CD8-positive, alpha-beta memory T cell (primary cell): ENCODE measurements at regions of chr16 and their contacts with region 1.

Region 1: DNA sequence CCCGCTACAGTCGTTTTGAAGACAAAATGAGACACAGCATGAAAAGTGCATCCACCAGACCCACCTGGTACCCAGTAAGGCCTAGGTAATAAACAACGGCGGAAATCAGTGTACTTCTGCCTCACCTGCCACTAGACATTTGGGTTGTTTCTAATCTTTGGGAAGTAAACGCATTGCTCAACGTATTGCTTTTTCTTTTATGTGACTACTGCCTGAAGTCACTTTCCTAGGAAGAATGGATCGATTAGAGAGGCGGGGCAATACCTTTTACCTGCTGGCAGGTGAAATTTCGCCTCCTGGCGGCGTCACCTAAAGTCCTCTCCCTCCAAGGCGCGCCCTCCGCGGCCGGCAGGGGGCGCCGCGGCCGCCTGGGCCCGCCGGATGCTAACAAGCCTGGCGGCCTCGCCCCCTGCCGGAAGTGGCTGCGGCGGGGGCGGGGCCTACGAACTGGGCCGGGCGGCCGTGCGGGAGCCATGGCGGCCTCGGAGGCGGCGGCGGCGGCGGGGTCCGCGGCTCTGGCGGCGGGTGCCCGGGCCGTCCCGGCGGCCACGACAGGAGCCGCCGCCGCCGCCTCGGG is at the start of gene ATMIN:
- DNase-seq: peak; percentile 84 to 92 (median 88)
- H3K4me3 ChIP-seq: peak within 1 kb of the TSS; percentile 71
- H3K4me3 Mint-ChIP-seq: peak within 1 kb of the TSS; percentile 84 to 90 (median 86)
- H3K27ac ChIP-seq: no peak within 1 kb of the TSS
- H3K27ac Mint-ChIP-seq: peak within 1 kb of the TSS; percentile 59 to 83 (median 74)
- H3K4me1 ChIP-seq: peaks cover 21% of the 10 kb centered on the region
- H3K4me1 Mint-ChIP-seq: peaks cover 34 to 44% (median 39%) of the 10 kb centered on the region in 3 donors
- H3K27me3 ChIP-seq: no peaks in the 10 kb centered on the region
- H3K27me3 Mint-ChIP-seq: peaks cover 0 to 2% of the 10 kb centered on the region in 2 donors
- total RNA-seq, gene ATMIN: 30.5 to 31.3 TPM

Region 2: DNA sequence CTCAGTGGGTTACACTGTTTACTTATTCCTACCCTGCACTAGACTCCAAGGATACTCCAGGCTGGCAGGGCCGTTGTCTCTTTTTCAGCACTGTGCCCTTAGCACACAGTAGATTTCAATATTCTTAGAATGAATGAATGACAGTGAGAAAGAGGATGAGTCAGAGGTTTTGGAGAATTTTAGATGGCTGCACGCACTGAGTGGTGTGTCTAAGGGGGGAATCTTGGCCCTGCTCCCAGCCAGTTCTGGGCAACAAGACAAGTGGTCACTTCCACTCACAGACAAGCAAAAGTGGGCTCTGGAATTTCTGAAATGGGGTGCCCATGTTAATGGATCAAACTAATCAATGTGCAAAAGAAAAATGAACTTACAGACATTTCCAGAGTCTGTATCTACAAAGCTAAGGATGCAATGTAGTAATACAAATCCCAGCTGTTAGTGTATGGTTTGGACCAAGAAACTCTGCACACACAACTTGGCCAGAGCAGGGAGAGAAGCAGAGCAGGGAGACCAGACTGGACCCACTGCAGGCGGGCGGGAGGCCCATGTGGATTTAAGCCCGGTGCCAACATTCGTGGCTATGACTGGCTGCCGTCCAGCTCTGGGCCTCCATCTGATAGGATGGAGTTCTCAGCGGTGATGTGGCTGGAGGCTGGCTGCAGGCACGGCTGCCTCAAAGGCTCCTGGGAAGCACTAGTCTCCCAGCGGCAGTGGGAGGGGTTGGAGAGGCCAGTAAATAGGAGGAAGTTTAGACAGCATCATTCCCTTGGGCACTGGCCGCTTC is 135.5 kb before region 1 on chr16:
- CTCF ChIA-PET with region 1: no interaction called
- POLR2A ChIA-PET with region 1: no interaction called
- DNase-seq: no peak
- H3K4me3 ChIP-seq: no peak overlapping the region
- H3K4me3 Mint-ChIP-seq: no peak overlapping the region
- H3K27ac ChIP-seq: no peak overlapping the region
- H3K27ac Mint-ChIP-seq: no peak overlapping the region
- H3K4me1 ChIP-seq: no peaks in the 10 kb centered on the region
- H3K4me1 Mint-ChIP-seq: no peaks in the 10 kb centered on the region
- H3K27me3 ChIP-seq: no peaks in the 10 kb centered on the region
- H3K27me3 Mint-ChIP-seq: peaks cover 8 to 21% of the 10 kb centered on the region in 2 donors

Region 3: DNA sequence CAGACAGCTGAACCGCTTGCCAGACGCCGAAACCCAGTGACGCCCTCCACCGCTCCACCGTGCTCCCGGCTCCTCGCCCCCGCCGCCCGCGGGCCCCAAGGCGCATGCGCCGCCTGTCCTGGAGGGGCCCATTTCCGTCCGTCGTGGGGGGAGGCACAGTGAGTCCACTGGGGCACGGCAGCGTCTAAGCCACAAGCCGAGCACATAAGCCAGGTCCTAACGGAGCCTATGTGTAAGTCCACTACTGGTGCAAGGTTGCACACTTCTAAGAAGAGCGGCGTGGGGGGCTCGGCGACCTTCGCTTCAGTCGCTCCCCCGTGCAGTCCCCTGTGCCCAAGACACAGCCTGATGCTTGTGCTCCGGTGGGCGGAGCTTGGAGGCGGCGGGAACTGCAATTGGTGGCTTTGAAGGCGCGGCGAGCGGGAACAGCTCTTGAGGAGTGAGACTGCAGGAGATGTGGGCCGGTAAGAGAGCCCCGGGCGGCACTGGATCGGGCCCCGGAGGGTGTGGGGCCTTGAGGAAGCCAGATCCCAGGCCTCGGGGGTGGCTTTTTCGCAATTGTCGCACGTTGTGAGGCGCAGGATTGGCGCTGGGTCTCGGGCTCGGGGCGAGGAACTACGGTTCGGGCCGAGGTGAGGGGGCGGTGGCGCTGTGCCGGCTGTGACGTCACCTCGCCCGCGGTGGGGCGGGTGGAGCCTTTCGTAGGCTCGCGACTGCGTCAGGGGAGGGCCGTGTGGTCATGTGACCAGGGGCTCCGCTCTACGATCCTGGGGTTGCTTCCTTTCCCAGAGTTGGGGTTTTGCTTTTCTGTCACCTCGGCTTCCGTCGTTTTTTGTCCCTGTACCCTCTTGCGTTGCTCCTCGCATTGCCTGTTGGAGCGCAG is 28.4 kb before region 1 on chr16 and contains the starts of genes CENPN and CMC2:
- CTCF ChIA-PET with region 1: interaction called, 77 read pairs
- POLR2A ChIA-PET with region 1: interaction called, 8 read pairs
- DNase-seq: peak; percentile 96 to 100 (median 99)
- H3K4me3 ChIP-seq: peak within 1 kb of the TSS; percentile 77
- H3K4me3 Mint-ChIP-seq: peak within 1 kb of the TSS; percentile 89 to 99 (median 92)
- H3K27ac ChIP-seq: peak within 1 kb of the TSS; percentile 94
- H3K27ac Mint-ChIP-seq: peak within 1 kb of the TSS; percentile 95 to 100 (median 100)
- H3K4me1 ChIP-seq: peaks cover 25% of the 10 kb centered on the region
- H3K4me1 Mint-ChIP-seq: peaks cover 39 to 55% (median 49%) of the 10 kb centered on the region in 3 donors
- H3K27me3 ChIP-seq: no peaks in the 10 kb centered on the region
- H3K27me3 Mint-ChIP-seq: peaks cover 0 to 10% of the 10 kb centered on the region in 2 donors
- total RNA-seq, gene CENPN: 52.2 to 53.7 TPM
- total RNA-seq, gene CMC2: 125 to 126 TPM

Region 4: GRCh38 chr16:81018496-81018895 is 17.0 kb before region 1 on chr16:
- CTCF ChIA-PET with region 1: interaction called, 11 read pairs
- POLR2A ChIA-PET with region 1: interaction called, 3 read pairs
- DNase-seq: no peak
- H3K4me3 ChIP-seq: no peak overlapping the region
- H3K4me3 Mint-ChIP-seq: no peak overlapping the region
- H3K27ac ChIP-seq: no peak overlapping the region
- H3K27ac Mint-ChIP-seq: peak overlapping the region in 1 of 8 donors; percentile 21
- H3K4me1 ChIP-seq: no peaks in the 10 kb centered on the region
- H3K4me1 Mint-ChIP-seq: peaks cover 2 to 5% (median 4%) of the 10 kb centered on the region in 3 donors
- H3K27me3 ChIP-seq: no peaks in the 10 kb centered on the region
- H3K27me3 Mint-ChIP-seq: no peaks in the 10 kb centered on the region

Region 5: DNA sequence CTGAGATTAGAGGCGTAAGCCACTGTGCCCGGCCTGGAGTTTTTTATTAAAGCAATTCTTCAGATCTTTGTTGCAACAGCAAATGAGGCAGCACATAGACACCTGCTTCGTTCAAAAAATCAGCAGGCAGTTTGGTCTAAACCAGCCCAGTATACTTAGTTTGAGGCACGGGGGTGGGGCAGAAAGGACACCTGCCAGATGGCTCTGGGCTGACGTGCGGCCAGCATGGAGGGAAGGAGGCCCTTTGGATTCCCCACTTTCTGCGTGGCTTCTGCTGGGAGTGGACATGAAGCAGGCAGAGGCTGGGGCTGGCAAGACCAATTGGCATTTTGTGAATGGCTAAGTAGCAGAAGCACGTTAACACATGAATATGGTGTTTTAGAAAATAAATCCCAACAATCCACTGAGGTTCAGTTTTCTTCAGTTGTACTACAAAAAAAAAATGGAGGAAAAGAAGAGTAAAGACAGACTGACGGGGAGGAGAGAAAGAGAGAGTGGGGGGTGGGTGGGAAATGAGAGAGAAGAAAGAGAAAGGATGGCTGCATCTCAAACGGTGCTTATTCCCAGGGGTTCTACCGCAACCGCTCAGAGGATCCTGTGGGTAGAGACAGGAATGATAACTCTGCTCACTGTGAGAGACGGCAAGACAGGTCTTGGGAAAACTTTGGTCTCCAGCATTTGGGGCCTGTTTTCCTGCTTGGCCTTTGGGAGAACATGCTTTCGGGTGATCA is 25.3 kb after region 1 on chr16:
- CTCF ChIA-PET with region 1: no interaction called
- POLR2A ChIA-PET with region 1: no interaction called
- DNase-seq: no peak
- H3K4me3 ChIP-seq: no peak overlapping the region
- H3K4me3 Mint-ChIP-seq: no peak overlapping the region
- H3K27ac ChIP-seq: no peak overlapping the region
- H3K27ac Mint-ChIP-seq: no peak overlapping the region
- H3K4me1 ChIP-seq: no peaks in the 10 kb centered on the region
- H3K4me1 Mint-ChIP-seq: no peaks in the 10 kb centered on the region
- H3K27me3 ChIP-seq: no peaks in the 10 kb centered on the region
- H3K27me3 Mint-ChIP-seq: no peaks in the 10 kb centered on the region

Region 6: GRCh38 chr16:81071816-81072215 is 36.3 kb after region 1 on chr16:
- CTCF ChIA-PET with region 1: interaction called, 39 read pairs
- POLR2A ChIA-PET with region 1: interaction called, 18 read pairs
- DNase-seq: no peak
- H3K4me3 ChIP-seq: no peak overlapping the region
- H3K4me3 Mint-ChIP-seq: peak overlapping the region in 1 of 7 donors; percentile 42
- H3K27ac ChIP-seq: no peak overlapping the region
- H3K27ac Mint-ChIP-seq: no peak overlapping the region
- H3K4me1 ChIP-seq: peaks cover 5% of the 10 kb centered on the region
- H3K4me1 Mint-ChIP-seq: no peaks in the 10 kb centered on the region
- H3K27me3 ChIP-seq: no peaks in the 10 kb centered on the region
- H3K27me3 Mint-ChIP-seq: peaks cover 0 to 11% of the 10 kb centered on the region in 2 donors

Region 7: GRCh38 chr16:81077076-81077940 is 41.8 kb after region 1 on chr16 and contains the start of gene C16orf46:
- CTCF ChIA-PET with region 1: interaction called, 39 read pairs
- POLR2A ChIA-PET with region 1: interaction called, 18 read pairs
- DNase-seq: peak; percentile 94 to 98 (median 96)
- H3K4me3 ChIP-seq: peak within 1 kb of the TSS; percentile 79
- H3K4me3 Mint-ChIP-seq: peak within 1 kb of the TSS in 3 of 7 donors; percentile 27 to 39 (median 38)
- H3K27ac ChIP-seq: peak within 1 kb of the TSS; percentile 95
- H3K27ac Mint-ChIP-seq: peak within 1 kb of the TSS in 2 of 8 donors; percentile 17 to 52
- H3K4me1 ChIP-seq: peaks cover 10% of the 10 kb centered on the region
- H3K4me1 Mint-ChIP-seq: peaks cover 3 to 5% (median 4%) of the 10 kb centered on the region in 3 donors
- H3K27me3 ChIP-seq: no peaks in the 10 kb centered on the region
- H3K27me3 Mint-ChIP-seq: peaks cover 0 to 2% of the 10 kb centered on the region in 2 donors
- total RNA-seq, gene C16orf46: 0.59 TPM in 1 of 2 experiments, not detected in the other